RWPE1 (cell line): ENCODE measurements at regions of chr1 and their contacts with region 1.

Region 1: GRCh38 chr1:205919026-205919746 is 24.1 kb downstream of the SLC26A9 start:
- DNase-seq: peak; percentile 87
- H3K27ac ChIP-seq: no peak overlapping the region
- CTCF ChIP-seq: peak; percentile 89

Region 2: DNA sequence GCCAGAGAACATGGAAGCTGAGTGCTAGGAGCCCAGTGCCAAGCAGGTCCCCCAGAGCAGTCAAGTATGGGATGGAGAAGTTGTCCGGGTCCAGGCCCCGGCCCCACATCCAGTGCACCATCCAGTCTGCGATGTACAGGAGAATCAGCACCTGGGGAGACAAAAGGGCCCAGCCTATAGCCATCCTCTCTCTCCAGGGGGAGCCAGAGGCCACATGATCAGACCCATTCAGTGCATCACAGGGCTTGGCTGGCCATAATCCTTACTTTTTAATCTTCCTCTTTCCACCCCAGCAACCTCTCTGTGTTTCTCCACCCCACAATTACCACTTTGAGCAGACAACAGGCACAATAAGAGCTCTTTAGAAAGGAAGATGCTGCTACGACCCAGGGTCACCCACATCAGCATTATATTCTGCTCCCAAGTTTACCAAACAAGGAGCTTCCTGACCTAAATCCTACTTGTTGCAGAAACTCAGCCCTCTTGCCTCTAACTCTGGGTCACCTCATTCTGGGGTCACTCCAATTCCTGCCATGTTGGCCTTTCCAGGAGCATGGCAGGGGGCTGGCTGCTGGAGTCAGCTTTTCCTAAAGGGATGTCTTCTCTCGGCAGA is 127.5 kb before region 1 on chr1:
- CTCF ChIA-PET with region 1: interaction called, 20 read pairs
- POLR2A ChIA-PET with region 1: no interaction called
- DNase-seq: peak; percentile 88
- H3K27ac ChIP-seq: no peak overlapping the region
- CTCF ChIP-seq: peak; percentile 75

Region 3: DNA sequence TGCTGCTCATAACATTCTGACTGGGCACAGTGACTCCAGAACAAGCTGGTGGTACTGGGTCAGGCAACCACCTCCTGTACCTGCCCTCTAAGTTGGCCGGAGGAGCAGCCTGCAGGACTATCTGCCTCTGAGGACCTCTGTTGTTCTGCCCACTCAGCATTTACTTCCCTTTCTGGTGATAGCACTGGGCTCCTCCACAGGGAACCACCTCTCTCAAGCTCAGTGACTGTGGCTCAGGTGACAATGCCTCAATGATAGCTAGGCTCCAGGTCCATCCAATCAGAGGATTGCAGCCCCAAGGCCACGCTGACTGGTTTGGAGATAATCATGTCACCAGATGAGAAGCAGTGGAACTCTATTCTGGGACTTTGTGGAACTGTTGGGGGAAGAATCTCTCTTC is 122.0 kb before region 1 on chr1:
- CTCF ChIA-PET with region 1: interaction called, 20 read pairs
- POLR2A ChIA-PET with region 1: no interaction called
- DNase-seq: no peak
- H3K27ac ChIP-seq: no peak overlapping the region
- CTCF ChIP-seq: no peak

Region 4: DNA sequence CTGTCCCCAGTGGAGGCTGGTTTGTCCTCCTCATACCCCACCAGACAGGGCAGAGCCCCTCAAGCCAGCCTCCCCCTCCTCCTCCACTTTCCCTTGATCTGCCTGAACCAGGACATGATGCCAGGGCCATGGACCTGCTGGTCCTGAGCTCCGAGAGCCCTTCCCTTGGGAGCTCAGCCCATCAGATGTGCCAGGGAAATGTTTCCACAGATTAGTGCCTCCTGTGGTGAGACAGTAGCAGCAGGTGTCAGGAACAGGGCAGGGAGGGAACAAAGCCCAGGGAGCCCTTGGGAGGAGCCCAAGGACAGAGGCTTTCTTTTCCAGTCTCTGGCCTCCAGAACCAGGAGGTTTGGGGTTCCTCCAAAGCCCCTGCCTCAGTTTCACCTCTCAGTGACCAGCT is 91.6 kb before region 1 on chr1:
- CTCF ChIA-PET with region 1: no interaction called
- POLR2A ChIA-PET with region 1: no interaction called
- DNase-seq: no peak
- H3K27ac ChIP-seq: no peak overlapping the region
- CTCF ChIP-seq: no peak

Region 5: GRCh38 chr1:205907794-205908193 is 11.4 kb before region 1 on chr1:
- CTCF ChIA-PET with region 1: interaction called, 14 read pairs
- POLR2A ChIA-PET with region 1: no interaction called
- DNase-seq: peak; percentile 52
- H3K27ac ChIP-seq: no peak overlapping the region
- CTCF ChIP-seq: no peak; the same call in 1 of the 2 replicates

Region 6: GRCh38 chr1:205933671-205934618 is 14.8 kb after region 1 on chr1:
- CTCF ChIA-PET with region 1: interaction called, 11 read pairs
- POLR2A ChIA-PET with region 1: no interaction called
- DNase-seq: peak; percentile 85
- H3K27ac ChIP-seq: peak overlapping the region; percentile 57
- CTCF ChIP-seq: no peak

Region 7: DNA sequence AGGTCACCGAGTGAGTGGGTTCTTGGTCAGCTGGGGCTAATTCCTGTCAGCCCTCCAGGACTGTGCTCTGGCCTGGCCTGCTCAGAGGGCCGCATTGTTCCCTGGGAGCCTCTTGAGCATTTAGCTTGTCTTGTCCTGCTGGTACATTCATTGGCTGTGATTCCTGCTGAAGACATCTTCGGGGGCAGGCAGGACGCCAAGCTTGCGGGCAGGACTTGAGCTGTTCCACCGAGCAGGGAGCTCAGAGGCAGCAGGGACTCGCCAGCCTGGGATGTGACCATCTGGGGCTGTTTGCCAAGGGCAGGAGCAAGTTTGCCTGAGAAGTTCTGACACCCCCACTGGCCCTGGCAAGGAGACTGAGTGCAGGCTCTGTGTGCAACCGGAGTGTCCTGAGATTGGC is 31.1 kb after region 1 on chr1:
- CTCF ChIA-PET with region 1: interaction called, 13 read pairs
- POLR2A ChIA-PET with region 1: no interaction called
- DNase-seq: peak; percentile 73
- H3K27ac ChIP-seq: peak overlapping the region; percentile 99
- CTCF ChIP-seq: no peak

Region 8: GRCh38 chr1:205998457-205999241 is 79.5 kb after region 1 on chr1:
- CTCF ChIA-PET with region 1: no interaction called
- POLR2A ChIA-PET with region 1: no interaction called
- DNase-seq: no peak
- H3K27ac ChIP-seq: 0 out of 2 replicates have a peak overlapping the region, but pooled peaks have one; percentile 9
- CTCF ChIP-seq: no peak

Region 9: GRCh38 chr1:206012086-206012859 is 93.1 kb after region 1 on chr1:
- CTCF ChIA-PET with region 1: no interaction called
- POLR2A ChIA-PET with region 1: no interaction called
- DNase-seq: no peak
- H3K27ac ChIP-seq: no peak overlapping the region
- CTCF ChIP-seq: no peak

Region 10: DNA sequence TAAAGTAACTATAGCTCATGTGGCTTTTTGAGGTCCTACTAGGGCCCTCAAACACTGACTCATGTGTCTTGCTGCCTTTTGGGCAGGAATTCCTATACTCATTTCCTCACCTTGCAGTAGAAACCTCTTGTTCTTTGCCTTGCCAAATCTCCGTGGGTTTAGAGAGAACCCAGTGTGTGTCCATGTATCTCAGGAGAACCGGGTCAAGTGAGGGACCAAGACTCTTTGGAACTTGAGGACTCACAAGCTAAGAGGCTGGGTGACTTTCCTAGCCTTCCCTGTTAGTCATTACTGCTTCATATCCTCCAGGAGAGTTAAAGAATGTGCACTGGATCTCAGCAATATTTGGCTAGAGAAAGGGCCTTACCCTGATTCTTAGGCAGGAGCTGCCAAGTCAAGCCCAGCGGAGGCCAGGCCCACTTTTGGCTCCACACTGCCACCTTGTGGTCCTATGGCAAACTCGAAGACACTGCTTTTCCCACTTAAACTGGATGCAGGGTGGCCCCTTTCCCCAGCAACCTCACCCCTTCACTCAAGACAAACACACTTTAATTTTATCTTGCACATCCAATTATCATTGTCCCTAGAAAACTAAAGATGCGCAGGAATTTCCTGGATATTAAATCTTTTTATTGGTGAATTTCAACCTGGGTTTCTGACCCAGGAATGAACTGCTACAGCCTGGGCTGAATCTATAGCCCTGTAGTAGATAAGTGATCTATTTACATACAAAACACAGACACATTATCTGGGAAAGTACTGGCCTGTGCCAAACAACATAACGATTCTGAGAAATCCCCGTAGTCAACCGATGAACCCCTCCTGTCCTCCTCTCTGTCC is 187.4 kb after region 1 on chr1:
- CTCF ChIA-PET with region 1: interaction called, 11 read pairs
- POLR2A ChIA-PET with region 1: no interaction called
- DNase-seq: peak; percentile 92
- H3K27ac ChIP-seq: no peak overlapping the region
- CTCF ChIP-seq: peak; percentile 86